ENCODE measurements at regions of chr1 and their contacts with region 1.

Region 1: DNA sequence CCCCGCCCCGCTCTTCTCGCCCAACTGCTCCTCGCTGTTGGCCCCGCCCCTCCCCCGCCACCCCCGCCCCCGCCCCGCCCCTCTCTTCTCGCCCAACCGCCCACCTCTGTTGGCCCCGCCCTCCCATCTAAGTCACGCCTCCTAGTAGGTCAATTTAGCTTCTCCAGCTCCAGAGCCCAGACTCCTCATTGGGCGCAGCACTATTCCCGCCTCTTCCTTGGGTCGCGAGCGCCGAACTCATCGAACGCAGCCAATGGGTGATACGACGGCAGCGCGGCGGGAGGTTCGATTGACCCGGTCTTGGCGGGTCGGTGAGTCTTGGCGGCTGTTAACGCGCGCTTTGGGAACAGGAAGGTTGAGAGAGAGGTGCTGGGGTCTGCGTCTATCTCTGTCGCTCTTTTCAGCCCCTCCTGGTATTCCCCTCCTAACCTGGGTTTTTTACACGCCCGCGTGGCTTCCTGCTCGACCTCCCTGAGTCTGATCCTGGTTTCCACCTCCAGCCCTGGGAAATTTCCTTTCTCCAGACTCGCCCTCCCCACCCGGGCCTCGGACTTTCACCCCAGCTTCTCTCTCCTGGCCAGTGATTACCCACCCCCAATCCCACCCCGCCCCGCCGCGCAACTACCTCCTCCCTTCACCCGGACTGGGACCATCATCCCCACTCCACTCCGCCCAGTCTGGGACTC is at the start of gene RAD54L:
- DNase-seq: peak; percentile 98 to 100 (median 98)
- ATAC-seq: peak; percentile 94
- H3K4me3 ChIP-seq: peak within 1 kb of the TSS; percentile 68
- H3K27ac ChIP-seq: peak within 1 kb of the TSS; percentile 91
- H3K4me1 ChIP-seq: peaks cover 22 to 40% of the 10 kb centered on the region in 2 experiments; a peak in 4 of 5 replicates
- H3K27me3 ChIP-seq: no peaks in the 10 kb centered on the region
- CTCF ChIP-seq: no peak
- EP300 ChIP-seq: peak; percentile 37
- POLR2A ChIP-seq: peak; percentile 97
- RAD21 ChIP-seq: no peak
- polyA plus RNA-seq, gene RAD54L: 37.1 to 92.3 TPM

Region 2: DNA sequence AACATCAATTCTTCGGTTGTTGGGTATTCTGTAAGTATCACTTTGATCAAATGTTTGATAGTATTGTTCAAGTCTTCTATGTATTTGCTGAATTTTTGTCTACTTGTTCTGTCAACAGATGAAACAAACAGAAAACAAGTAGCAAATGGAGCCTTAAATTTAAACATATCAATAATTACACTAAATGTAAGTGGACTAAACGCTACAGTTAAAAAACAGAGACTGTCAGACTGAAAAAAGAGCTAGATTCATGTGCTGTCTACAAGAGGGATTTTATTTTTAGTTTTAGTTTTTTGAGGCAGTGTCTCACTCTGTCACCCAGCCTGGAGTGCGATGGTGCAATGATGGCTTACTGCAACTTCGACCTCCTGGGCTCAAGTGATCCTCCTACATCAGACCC is 10.7 kb before region 1 on chr1:
- CTCF ChIA-PET with region 1: no interaction called
- POLR2A ChIA-PET with region 1: interaction called, 11 read pairs
- in situ Hi-C with region 1: no loop called
- intact Hi-C with region 1: no loop called
- DNase-seq: no peak
- ATAC-seq: no peak
- H3K4me3 ChIP-seq: no peak overlapping the region
- H3K27ac ChIP-seq: no peak overlapping the region
- H3K4me1 ChIP-seq: no peaks in the 10 kb centered on the region
- H3K27me3 ChIP-seq: no peaks in the 10 kb centered on the region
- CTCF ChIP-seq: no peak
- EP300 ChIP-seq: no peak
- POLR2A ChIP-seq: no peak
- RAD21 ChIP-seq: no peak

Region 3: GRCh38 chr1:46262508-46262907 is 14.9 kb after region 1 on chr1:
- CTCF ChIA-PET with region 1: no interaction called
- POLR2A ChIA-PET with region 1: interaction called, 23 read pairs
- in situ Hi-C with region 1: no loop called
- intact Hi-C with region 1: no loop called
- DNase-seq: no peak
- ATAC-seq: no peak
- H3K4me3 ChIP-seq: no peak overlapping the region
- H3K27ac ChIP-seq: no peak overlapping the region
- H3K4me1 ChIP-seq: no peaks in the 10 kb centered on the region
- H3K27me3 ChIP-seq: no peaks in the 10 kb centered on the region
- CTCF ChIP-seq: no peak
- EP300 ChIP-seq: no peak
- POLR2A ChIP-seq: no peak
- RAD21 ChIP-seq: no peak

Region 4: DNA sequence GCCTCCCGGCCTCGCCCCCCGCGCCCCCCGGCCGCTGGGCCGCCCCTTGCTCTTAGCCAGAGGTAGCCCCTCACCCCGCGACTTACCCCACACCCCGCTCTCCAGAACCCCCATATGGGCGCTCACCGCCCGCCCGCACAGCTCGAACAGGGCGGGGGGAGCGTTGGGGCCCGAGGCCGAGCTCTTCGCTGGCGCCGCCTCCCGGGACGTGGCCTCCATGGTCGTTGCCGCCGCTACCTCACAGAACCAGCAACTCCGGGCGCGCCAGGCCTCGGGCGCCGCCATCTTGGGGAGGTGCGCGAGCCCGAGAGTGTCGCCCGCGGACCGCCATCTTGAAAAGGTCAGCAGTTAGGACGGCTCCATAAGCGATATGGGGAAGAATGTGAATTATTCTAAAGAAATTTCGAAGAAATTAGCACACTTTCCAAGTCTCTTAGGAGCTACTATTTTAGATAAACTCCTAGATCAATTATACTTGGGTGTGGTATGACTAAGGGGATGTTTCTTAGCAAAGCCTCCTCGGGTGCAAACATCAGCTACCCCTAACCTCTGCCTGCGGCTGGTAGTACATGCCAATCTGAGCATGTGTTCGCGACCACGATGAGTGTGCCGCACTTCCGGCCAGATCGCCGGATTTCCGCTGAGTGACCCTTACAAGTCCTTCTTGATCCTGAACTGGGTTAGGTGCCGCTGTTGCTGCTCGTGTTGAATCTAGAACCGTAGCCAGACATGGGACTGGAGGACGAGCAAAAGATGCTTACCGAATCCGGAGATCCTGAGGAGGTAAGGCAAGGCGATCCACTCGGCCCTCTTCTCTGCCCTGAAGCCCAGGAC is 55.7 kb after region 1 on chr1 and contains the starts of genes LRRC41 and UQCRH:
- CTCF ChIA-PET with region 1: interaction called, 4 read pairs
- POLR2A ChIA-PET with region 1: interaction called, 16 read pairs
- in situ Hi-C with region 1: no loop called
- intact Hi-C with region 1: loop called (anchors 5 kb)
- DNase-seq: peak; percentile 87 to 100 (median 92)
- ATAC-seq: peak; percentile 80
- H3K4me3 ChIP-seq: peak within 1 kb of the TSS; percentile 76
- H3K27ac ChIP-seq: peak within 1 kb of the TSS; percentile 96
- H3K4me1 ChIP-seq: peaks cover 36 to 44% of the 10 kb centered on the region in 2 experiments; a peak in 4 of 5 replicates
- H3K27me3 ChIP-seq: no peaks in the 10 kb centered on the region
- CTCF ChIP-seq: peak; percentile 20 to 46 (median 46); a peak in 3 of 6 replicates
- EP300 ChIP-seq: peak; percentile 15
- POLR2A ChIP-seq: peak; percentile 98
- RAD21 ChIP-seq: 0 out of 4 replicates have a peak, but pooled peaks of 1 of the 2 experiments have one; percentile 2
- polyA plus RNA-seq, gene LRRC41: 10.5 to 11.7 TPM
- polyA plus RNA-seq, gene UQCRH: 4,348 to 5,184 TPM

Measured in K562 (cell line).